ENCODE measurements at regions of chr5 and their contacts with region 1.

Region 1: GRCh38 chr5:61768692-61769281 is 436.7 kb downstream of the ZSWIM6 start:
- DNase-seq: no peak
- H3K4me3 ChIP-seq: no peak overlapping the region
- H3K27ac ChIP-seq: no peak overlapping the region
- H3K4me1 ChIP-seq: no peaks in the 10 kb centered on the region
- H3K27me3 ChIP-seq: no peaks in the 10 kb centered on the region
- CTCF ChIP-seq: no peak
- POLR2A ChIP-seq: no peak

Region 2: DNA sequence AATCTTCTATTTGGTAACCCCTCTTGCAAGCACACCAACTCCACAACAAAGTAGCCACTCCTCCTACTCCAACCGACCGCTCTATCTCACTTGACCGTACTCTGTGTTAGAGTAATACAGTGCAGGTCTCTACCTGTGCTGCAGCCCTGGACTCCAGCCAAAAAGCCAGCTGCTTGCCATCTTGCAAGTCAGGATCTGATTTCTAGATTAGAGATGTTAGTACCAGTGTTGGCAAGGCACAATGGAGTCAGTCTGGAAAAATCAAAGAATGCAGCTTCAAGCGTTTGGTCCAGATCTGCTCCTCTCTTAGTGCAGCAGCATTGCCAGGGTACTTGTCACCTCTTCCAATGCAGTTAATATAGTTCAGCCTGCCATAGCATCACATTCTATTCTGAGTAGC is 40.9 kb after region 1 on chr5:
- intact Hi-C with region 1: loop called (anchors 2 kb)
- DNase-seq: no peak
- H3K4me3 ChIP-seq: no peak overlapping the region
- H3K27ac ChIP-seq: no peak overlapping the region
- H3K4me1 ChIP-seq: no peaks in the 10 kb centered on the region
- H3K27me3 ChIP-seq: no peaks in the 10 kb centered on the region
- CTCF ChIP-seq: no peak
- POLR2A ChIP-seq: no peak

Measured in vagina (tissue), 2 donors.